A549 (cell line): ENCODE measurements at regions of chr11 and their contacts with region 1.

Region 1: GRCh38 chr11:131674051-131674755 is 303.8 kb downstream of the NTM start:
- DNase-seq: peak; percentile 31 to 38
- ATAC-seq: peak; percentile 85 to 96
- H3K4me3 ChIP-seq: no peak overlapping the region
- H3K27ac ChIP-seq: no peak overlapping the region
- H3K4me1 ChIP-seq: no peaks in the 10 kb centered on the region
- CTCF ChIP-seq: peak; percentile 66
- EP300 ChIP-seq: no peak
- POLR2A ChIP-seq: no peak
- RAD21 ChIP-seq: peak; percentile 75 to 84

Region 2: GRCh38 chr11:131064373-131064991 is 609.7 kb before region 1 on chr11:
- CTCF ChIA-PET with region 1: interaction called, 27 read pairs
- POLR2A ChIA-PET with region 1: no interaction called
- DNase-seq: peak; percentile 52 to 54
- ATAC-seq: peak; percentile 81 to 94
- H3K4me3 ChIP-seq: no peak overlapping the region
- H3K27ac ChIP-seq: no peak overlapping the region
- H3K4me1 ChIP-seq: no peaks in the 10 kb centered on the region
- CTCF ChIP-seq: peak; percentile 72
- EP300 ChIP-seq: no peak
- POLR2A ChIP-seq: no peak
- RAD21 ChIP-seq: peak; percentile 77 to 82

Region 3: GRCh38 chr11:131688051-131688698 is 14.0 kb after region 1 on chr11:
- CTCF ChIA-PET with region 1: interaction called, 22 read pairs
- POLR2A ChIA-PET with region 1: no interaction called
- DNase-seq: peak; percentile 35 to 59
- ATAC-seq: peak; percentile 72 to 91
- H3K4me3 ChIP-seq: no peak overlapping the region
- H3K27ac ChIP-seq: no peak overlapping the region
- H3K4me1 ChIP-seq: no peaks in the 10 kb centered on the region
- CTCF ChIP-seq: peak; percentile 54
- EP300 ChIP-seq: no peak
- POLR2A ChIP-seq: no peak
- RAD21 ChIP-seq: 0 out of 5 replicates have a peak, but pooled peaks have one; percentile 21 to 38

Region 4: DNA sequence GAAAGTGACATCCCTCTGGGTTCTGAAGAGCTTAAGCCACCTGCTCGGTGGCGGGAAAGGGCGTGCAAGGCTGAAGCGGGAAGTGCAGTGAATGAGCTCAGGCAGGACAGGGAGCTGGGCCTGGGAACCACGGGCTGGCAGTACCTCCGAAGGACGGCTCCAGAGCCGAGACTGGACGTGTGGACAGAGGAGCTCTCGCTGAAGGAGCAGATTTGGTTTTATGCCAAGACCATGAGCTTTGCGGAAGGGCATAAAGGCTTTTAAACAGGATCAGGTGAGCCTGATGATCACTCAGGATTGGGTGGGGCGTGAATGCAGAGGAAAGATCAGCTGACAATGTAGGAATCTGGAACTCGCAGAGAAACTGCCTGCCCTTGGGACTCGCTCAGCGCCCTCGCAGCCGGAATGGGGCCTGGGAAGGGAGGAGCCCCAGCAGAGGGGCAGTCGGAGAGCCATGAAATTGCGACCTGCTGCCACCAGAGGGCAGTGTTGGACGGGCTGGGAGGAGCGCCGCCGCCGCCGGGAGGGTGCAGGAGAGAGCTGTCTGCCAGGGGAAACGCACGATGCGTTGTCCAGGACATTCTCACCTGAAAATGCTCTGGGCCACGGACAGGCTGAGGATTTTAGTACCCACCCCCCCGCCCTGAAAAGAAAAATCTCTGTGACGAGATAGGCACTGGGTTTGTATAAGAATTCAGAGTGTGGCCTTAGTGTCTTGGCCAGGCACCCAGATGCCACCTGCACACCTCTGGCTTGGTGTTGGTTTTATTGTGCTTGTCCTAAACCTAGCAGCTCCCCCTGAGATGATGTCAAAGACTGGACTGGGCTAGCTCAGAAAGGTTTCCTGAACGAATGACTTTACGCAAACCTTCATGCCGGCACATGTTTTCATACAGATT is 20.6 kb after region 1 on chr11:
- CTCF ChIA-PET with region 1: interaction called, 22 read pairs
- POLR2A ChIA-PET with region 1: no interaction called
- DNase-seq: peak; percentile 41 to 59
- ATAC-seq: peak; percentile 90 to 94
- H3K4me3 ChIP-seq: 0 out of 3 replicates have a peak overlapping the region, but pooled peaks have one; percentile 24
- H3K27ac ChIP-seq: no peak overlapping the region
- H3K4me1 ChIP-seq: no peaks in the 10 kb centered on the region
- CTCF ChIP-seq: peak; percentile 59
- EP300 ChIP-seq: no peak
- POLR2A ChIP-seq: no peak
- RAD21 ChIP-seq: peak; percentile 47 to 49

Region 5: GRCh38 chr11:131767421-131767820 is 93.2 kb after region 1 on chr11:
- CTCF ChIA-PET with region 1: no interaction called
- POLR2A ChIA-PET with region 1: no interaction called
- DNase-seq: no peak
- ATAC-seq: no peak
- H3K4me3 ChIP-seq: no peak overlapping the region
- H3K27ac ChIP-seq: no peak overlapping the region
- H3K4me1 ChIP-seq: no peaks in the 10 kb centered on the region
- CTCF ChIP-seq: no peak
- EP300 ChIP-seq: no peak
- POLR2A ChIP-seq: no peak
- RAD21 ChIP-seq: no peak